ENCODE measurements at regions of chr7 and their contacts with region 1.

Region 1: GRCh38 chr7:25851332-25852210 is 300.4 kb upstream of the NFE2L3 start:
- DNase-seq: peak; percentile 62 to 85 (median 80)
- H3K4me3 ChIP-seq: peak overlapping the region in 23 of 59 donors; percentile 4 to 50 (median 25)
- H3K27ac ChIP-seq: peak overlapping the region in 1 of 59 donors; percentile 13
- H3K27me3 ChIP-seq: peaks cover 0 to 53% (median 48%) of the 10 kb centered on the region in 45 donors
- CTCF ChIP-seq: peak; percentile 70 to 97 (median 91)

Region 2: DNA sequence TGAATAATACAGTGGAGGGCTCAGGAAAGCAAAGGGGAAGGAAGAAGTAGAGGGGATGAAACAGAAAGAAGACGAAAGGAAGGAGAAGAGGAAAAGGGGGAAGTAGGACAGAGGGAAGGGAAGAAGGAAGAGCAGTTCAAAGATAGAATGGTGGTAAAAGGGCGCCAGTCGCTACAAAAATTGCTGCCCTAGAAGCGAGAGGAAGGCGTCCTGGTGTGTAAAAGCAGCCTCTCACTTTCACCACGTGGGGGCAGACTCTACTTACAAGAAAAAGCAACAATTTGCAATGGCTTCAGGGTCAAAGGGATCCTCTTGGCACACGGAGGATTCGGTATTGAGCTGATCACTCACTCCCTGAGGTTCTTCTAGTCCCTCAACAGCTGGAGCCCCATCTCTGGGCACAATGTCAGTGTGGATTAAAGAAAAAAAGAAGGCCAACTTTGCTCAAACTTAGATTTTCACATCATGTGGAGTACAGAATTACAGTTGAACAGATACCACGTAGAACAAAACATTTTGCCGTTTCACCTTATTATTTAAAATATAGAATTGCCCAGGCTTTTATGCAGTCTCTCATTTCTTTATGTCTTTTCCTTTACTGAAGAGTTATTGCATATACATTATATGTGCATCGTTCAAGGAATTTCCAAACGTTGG is 591.9 kb before region 1 on chr7:
- intact Hi-C with region 1: loop called (anchors 5 kb)
- DNase-seq: peak in 8 of 10 donors; percentile 23 to 81 (median 63)
- H3K4me3 ChIP-seq: peak overlapping the region in 2 of 59 donors; percentile 12 to 15
- H3K27ac ChIP-seq: peak overlapping the region in 5 of 59 donors; percentile 15 to 58 (median 26)
- H3K27me3 ChIP-seq: peaks cover 0 to 4% (median 0%) of the 10 kb centered on the region in 45 donors
- CTCF ChIP-seq: peak; percentile 78 to 99 (median 93)

Region 3: DNA sequence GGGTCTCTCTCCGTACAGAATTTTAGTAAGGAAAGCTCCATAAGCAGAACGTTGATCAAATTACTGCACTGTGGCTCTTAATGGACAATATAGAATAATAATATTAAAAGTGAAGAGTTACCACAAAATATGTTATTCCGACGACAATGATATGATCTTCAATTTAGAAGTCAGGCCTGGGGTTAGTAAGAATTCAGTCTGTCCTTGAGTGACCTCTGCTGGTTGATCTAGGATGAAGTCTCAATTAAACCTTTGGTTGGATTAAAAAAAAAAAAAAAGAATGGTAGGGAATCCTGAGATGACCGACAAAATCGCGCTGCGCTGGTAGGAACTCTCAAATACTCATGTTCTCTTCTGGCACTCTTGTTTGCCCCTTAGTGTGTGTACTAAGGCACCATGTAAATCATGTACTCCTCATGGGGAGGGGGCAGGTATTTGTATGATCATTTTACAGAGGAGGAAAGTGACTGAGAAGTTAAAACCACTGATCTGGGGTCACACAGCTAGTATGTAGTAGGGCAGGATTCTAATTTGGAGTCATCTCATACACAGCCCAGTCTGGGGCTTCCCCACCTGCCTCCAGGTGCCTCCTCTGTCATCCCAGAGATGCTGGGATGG is 462.0 kb before region 1 on chr7:
- intact Hi-C with region 1: loop called (anchors 2 kb)
- DNase-seq: peak in 1 of 10 donors; percentile 56
- H3K4me3 ChIP-seq: no peak overlapping the region
- H3K27ac ChIP-seq: no peak overlapping the region
- H3K27me3 ChIP-seq: no peaks in the 10 kb centered on the region
- CTCF ChIP-seq: peak; percentile 60 to 94 (median 79)

Region 4: GRCh38 chr7:25565949-25566348 is 285.6 kb before region 1 on chr7:
- intact Hi-C with region 1: loop called (anchors 1 to 2 kb)
- DNase-seq: peak in 8 of 10 donors; percentile 25 to 72 (median 58)
- H3K4me3 ChIP-seq: peak overlapping the region in 11 of 59 donors; percentile 4 to 41 (median 25)
- H3K27ac ChIP-seq: no peak overlapping the region
- H3K27me3 ChIP-seq: peaks cover 0 to 3% (median 0%) of the 10 kb centered on the region in 45 donors
- CTCF ChIP-seq: peak; percentile 99 to 100 (median 100)

Region 5: GRCh38 chr7:25720427-25720826 is 131.1 kb before region 1 on chr7:
- intact Hi-C with region 1: loop called (anchors 1 to 5 kb)
- DNase-seq: no peak
- H3K4me3 ChIP-seq: no peak overlapping the region
- H3K27ac ChIP-seq: no peak overlapping the region
- H3K27me3 ChIP-seq: no peaks in the 10 kb centered on the region
- CTCF ChIP-seq: peak in 53 of 56 donors; percentile 20 to 61 (median 44)

Region 6: GRCh38 chr7:26213821-26214515 is 362.4 kb after region 1 on chr7:
- intact Hi-C with region 1: no loop called
- DNase-seq: no peak
- H3K4me3 ChIP-seq: no peak overlapping the region
- H3K27ac ChIP-seq: peak overlapping the region in 1 of 59 donors; percentile 30
- H3K27me3 ChIP-seq: no peaks in the 10 kb centered on the region
- CTCF ChIP-seq: no peak

Region 7: GRCh38 chr7:26864309-26865093 is 1012.9 kb after region 1 on chr7 and contains the start of gene SKAP2:
- intact Hi-C with region 1: loop called in 1 of 2 experiments (anchors 10 kb)
- DNase-seq: peak; percentile 92 to 98 (median 96)
- H3K4me3 ChIP-seq: peak within 1 kb of the TSS; percentile 44 to 88 (median 72)
- H3K27ac ChIP-seq: peak within 1 kb of the TSS; percentile 6 to 94 (median 82)
- H3K27me3 ChIP-seq: peaks cover 0 to 32% (median 4%) of the 10 kb centered on the region in 45 donors
- CTCF ChIP-seq: peak in 6 of 56 donors; percentile 3 to 45 (median 7)
- total RNA-seq, gene SKAP2: 13.3 to 44.8 (median 28.6) TPM

Region 8: GRCh38 chr7:27160546-27161213 is 1309.1 kb after region 1 on chr7:
- intact Hi-C with region 1: loop called in 1 of 2 experiments (anchors 10 kb)
- DNase-seq: peak; percentile 74 to 90 (median 79)
- H3K4me3 ChIP-seq: peak overlapping the region; percentile 29 to 76 (median 62)
- H3K27ac ChIP-seq: peak overlapping the region in 1 of 59 donors; percentile 36
- H3K27me3 ChIP-seq: peaks cover 20 to 100% (median 94%) of the 10 kb centered on the region in 45 donors
- CTCF ChIP-seq: peak; percentile 96 to 100 (median 100)